T-cell (primary cell): ENCODE measurements at regions of chr5 and their contacts with region 1.

Region 1: DNA sequence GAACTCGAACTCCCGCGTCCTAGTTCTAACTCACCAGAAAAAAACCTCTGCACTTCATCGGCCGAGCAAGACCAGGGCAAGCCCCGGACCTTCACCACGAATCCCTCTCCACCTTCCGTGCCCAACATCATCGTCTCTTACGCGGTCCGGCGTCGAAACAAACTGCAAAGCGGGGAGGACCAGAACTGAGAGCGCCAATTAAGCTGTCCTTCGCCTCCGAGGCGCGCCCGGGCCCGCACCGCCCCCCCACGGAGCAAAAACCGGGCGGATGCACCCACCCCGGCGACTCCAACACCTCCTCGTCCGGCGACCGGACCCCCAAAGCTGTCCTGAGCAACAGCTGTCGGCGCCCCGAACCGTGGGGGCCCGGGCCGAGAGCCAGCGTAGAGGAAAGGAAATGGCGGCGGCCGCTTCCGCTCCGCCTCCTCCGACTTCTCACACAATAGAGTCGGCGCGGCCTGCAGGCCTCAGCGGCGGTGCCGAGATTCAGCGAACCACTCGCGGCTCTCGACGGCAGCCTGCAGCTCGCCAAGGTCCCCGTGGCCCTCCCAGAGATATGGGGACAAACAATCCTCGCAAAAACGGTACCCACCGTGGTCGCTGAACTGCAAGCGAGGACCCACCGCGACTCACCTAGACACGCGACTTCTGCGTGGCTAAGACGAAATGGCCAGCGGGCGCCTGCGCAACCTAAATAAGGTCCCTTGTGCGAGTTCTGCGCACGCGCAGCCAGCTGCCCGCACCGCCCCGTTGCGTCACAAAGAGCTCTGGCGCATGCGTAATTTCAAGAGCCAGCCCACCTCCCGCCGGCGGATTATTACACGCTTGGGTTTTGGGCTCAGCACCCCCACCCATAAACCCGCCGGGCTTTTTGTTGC is at the start of gene HNRNPH1:
- DNase-seq: peak; percentile 96 to 100 (median 98)
- ATAC-seq: peak; percentile 79 to 80 (median 79)
- H3K4me3 ChIP-seq: peak within 1 kb of the TSS; percentile 80 to 98
- H3K4me3 Mint-ChIP-seq: peak within 1 kb of the TSS; percentile 93 to 97 (median 96)
- H3K27ac ChIP-seq: peak within 1 kb of the TSS; percentile 99
- H3K27ac Mint-ChIP-seq: peak within 1 kb of the TSS; percentile 97 to 99
- H3K4me1 ChIP-seq: peaks cover 35 to 38% of the 10 kb centered on the region in 2 experiments
- H3K4me1 Mint-ChIP-seq: peaks cover 44 to 59% (median 50%) of the 10 kb centered on the region in 3 donors
- H3K27me3 ChIP-seq: no peaks in the 10 kb centered on the region
- H3K27me3 Mint-ChIP-seq: no peaks in the 10 kb centered on the region
- total RNA-seq, gene HNRNPH1: 1,278 to 2,165 (median 1,301) TPM

Region 2: GRCh38 chr5:179559284-179560252 is 63.7 kb before region 1 on chr5:
- CTCF ChIA-PET with region 1: interaction called in 1 of 2 experiments, 3 read pairs
- POLR2A ChIA-PET with region 1: interaction called, 4 to 15 read pairs
- DNase-seq: peak; percentile 61 to 96 (median 92)
- ATAC-seq: peak; percentile 99 to 100 (median 100)
- H3K4me3 ChIP-seq: peak overlapping the region; percentile 57 to 84
- H3K4me3 Mint-ChIP-seq: peak overlapping the region; percentile 82 to 95 (median 88)
- H3K27ac ChIP-seq: peak overlapping the region; percentile 64
- H3K27ac Mint-ChIP-seq: peak overlapping the region; percentile 87 to 92
- H3K4me1 ChIP-seq: peaks cover 6 to 9% of the 10 kb centered on the region in 2 experiments
- H3K4me1 Mint-ChIP-seq: peaks cover 22 to 31% (median 23%) of the 10 kb centered on the region in 3 donors
- H3K27me3 ChIP-seq: no peaks in the 10 kb centered on the region
- H3K27me3 Mint-ChIP-seq: no peaks in the 10 kb centered on the region

Region 3: GRCh38 chr5:179608131-179608581 is 15.1 kb before region 1 on chr5:
- CTCF ChIA-PET with region 1: interaction called in 1 of 2 experiments, 4 read pairs
- POLR2A ChIA-PET with region 1: interaction called, 10 to 19 read pairs
- DNase-seq: peak in 34 of 35 experiments; percentile 21 to 70 (median 52)
- ATAC-seq: peak; percentile 62 to 86 (median 73)
- H3K4me3 ChIP-seq: no peak overlapping the region
- H3K4me3 Mint-ChIP-seq: peak overlapping the region in 1 of 3 donors; percentile 60
- H3K27ac ChIP-seq: peak overlapping the region; percentile 11
- H3K27ac Mint-ChIP-seq: peak overlapping the region; percentile 77 to 85
- H3K4me1 ChIP-seq: peaks cover 18 to 30% of the 10 kb centered on the region in 2 experiments
- H3K4me1 Mint-ChIP-seq: peaks cover 48 to 56% (median 52%) of the 10 kb centered on the region in 3 donors
- H3K27me3 ChIP-seq: no peaks in the 10 kb centered on the region
- H3K27me3 Mint-ChIP-seq: no peaks in the 10 kb centered on the region

Region 4: DNA sequence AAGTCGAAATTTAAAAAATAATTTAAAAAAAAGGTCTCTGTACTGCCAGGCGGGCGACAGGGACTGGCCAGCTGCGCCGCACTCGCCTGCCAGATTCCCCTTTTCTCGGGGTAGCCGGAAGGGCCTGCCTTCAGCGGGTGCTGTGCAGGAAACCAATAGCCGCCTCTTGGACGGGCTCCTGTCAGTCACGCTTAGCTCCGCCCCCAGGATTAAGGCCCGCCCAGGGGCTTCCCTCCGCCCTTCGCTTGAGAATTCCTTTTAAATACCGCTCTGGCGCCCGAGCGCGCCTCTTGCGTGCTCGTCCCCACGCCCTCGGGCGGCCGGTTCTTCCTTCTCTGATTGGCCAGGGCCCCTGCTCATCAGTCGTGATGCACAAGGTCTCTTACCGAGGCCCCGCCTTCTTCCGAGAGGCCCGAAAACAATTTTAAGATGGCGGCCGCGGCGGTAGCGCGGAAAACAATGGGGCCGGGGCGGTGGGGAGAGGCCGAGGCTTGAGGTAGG is 109.2 kb after region 1 on chr5 and contains the start of gene MAML1:
- CTCF ChIA-PET with region 1: no interaction called
- POLR2A ChIA-PET with region 1: interaction called in 1 of 2 experiments, 12 read pairs
- DNase-seq: peak; percentile 98 to 100 (median 100)
- ATAC-seq: peak; percentile 93 to 97 (median 96)
- H3K4me3 ChIP-seq: peak within 1 kb of the TSS; percentile 76 to 88
- H3K4me3 Mint-ChIP-seq: peak within 1 kb of the TSS; percentile 91 to 95 (median 94)
- H3K27ac ChIP-seq: peak within 1 kb of the TSS; percentile 57
- H3K27ac Mint-ChIP-seq: peak within 1 kb of the TSS; percentile 91 to 93
- H3K4me1 ChIP-seq: peaks cover 20 to 36% of the 10 kb centered on the region in 2 experiments
- H3K4me1 Mint-ChIP-seq: peaks cover 31 to 44% (median 41%) of the 10 kb centered on the region in 3 donors
- H3K27me3 ChIP-seq: no peaks in the 10 kb centered on the region
- H3K27me3 Mint-ChIP-seq: no peaks in the 10 kb centered on the region
- total RNA-seq, gene MAML1: 31.3 to 56.4 (median 50.6) TPM

Region 5: DNA sequence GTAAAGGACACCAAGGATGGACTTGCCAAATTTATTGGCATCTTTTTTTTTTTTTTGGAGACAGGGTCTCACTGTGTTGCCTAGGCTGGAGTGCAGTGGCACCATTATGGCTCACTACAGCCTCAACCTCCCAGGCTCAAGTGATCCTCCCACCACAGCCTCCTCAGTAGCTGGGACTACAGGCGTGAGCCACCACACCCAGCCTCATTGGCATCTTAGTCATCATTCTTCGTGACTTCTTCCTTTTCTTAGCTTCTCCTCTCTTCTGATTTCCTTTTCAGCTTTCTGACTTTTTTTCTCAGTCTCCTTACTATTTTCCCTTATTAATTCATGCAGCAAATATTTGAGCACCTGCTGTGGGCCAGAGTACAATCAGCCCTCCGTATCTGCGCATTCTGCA is 115.5 kb after region 1 on chr5:
- CTCF ChIA-PET with region 1: no interaction called
- POLR2A ChIA-PET with region 1: interaction called in 1 of 2 experiments, 12 read pairs
- DNase-seq: no peak
- ATAC-seq: no peak
- H3K4me3 ChIP-seq: no peak overlapping the region
- H3K4me3 Mint-ChIP-seq: peak overlapping the region in 1 of 3 donors; percentile 53
- H3K27ac ChIP-seq: no peak overlapping the region
- H3K27ac Mint-ChIP-seq: no peak overlapping the region
- H3K4me1 ChIP-seq: peaks cover 15 to 59% of the 10 kb centered on the region in 2 experiments
- H3K4me1 Mint-ChIP-seq: peaks cover 65 to 69% (median 66%) of the 10 kb centered on the region in 3 donors
- H3K27me3 ChIP-seq: no peaks in the 10 kb centered on the region
- H3K27me3 Mint-ChIP-seq: no peaks in the 10 kb centered on the region